ENCODE measurements at regions of chr12 and their contacts with region 1.

Region 1: DNA sequence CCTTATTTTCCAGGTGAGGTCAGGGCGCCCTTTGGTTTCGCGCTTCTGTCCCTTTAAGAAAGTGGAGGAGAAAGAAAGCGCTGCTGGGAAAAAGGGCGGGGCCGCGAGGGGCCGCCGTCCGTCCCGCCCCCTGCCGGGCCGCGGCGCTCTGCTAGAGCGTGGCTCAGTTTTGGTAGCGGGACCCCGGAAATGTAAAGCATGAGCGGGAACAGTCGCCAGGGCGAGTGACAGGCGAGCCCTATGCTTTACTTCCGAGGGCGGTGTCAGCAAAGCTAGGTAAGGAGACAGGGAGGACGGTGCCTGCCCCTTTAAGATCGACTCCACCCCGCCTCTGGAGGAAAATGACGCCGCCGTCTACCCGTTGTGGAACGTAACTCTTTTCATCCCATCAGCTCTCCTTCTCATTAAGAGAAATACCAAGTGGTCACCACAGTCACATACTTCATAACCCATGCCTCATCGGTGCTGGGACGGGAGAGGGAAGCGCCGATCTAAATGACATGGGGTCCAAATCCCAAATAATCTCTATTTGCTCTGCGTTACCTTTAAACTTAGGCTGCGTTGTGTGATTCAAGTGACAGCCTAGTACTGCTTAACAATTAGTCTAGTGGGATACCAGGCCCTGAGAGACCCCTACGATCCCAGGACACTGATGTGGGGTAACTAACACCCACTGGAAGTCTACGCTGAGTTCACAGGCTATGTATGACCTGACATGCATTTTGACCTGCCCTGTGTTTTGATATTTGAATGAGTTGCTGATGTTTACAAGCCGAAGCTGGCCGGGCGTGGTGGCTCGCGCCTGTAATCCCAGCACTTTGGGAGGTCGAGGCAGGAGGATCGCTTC is at the start of gene ETFBKMT:
- DNase-seq: peak; percentile 93
- ATAC-seq: peak; percentile 99
- H3K4me3 ChIP-seq: peak within 1 kb of the TSS; percentile 100
- H3K27ac ChIP-seq: peak within 1 kb of the TSS; percentile 72
- H3K4me1 ChIP-seq: peaks cover 8% of the 10 kb centered on the region
- H3K27me3 ChIP-seq: no peaks in the 10 kb centered on the region
- CTCF ChIP-seq: peak; percentile 21; the same call in 1 of the 2 replicates
- total RNA-seq, gene ETFBKMT: 0.52 and 0.58 TPM in 2 replicates

Region 2: GRCh38 chr12:31728917-31729640 is 69.8 kb after region 1 on chr12 and contains the start of gene AMN1:
- CTCF ChIA-PET with region 1: no interaction called
- POLR2A ChIA-PET with region 1: no interaction called
- intact Hi-C with region 1: loop called (anchors 2 kb)
- DNase-seq: peak; percentile 98
- ATAC-seq: peak; percentile 96
- H3K4me3 ChIP-seq: peak within 1 kb of the TSS; percentile 88
- H3K27ac ChIP-seq: peak within 1 kb of the TSS; percentile 77
- H3K4me1 ChIP-seq: peaks cover 38% of the 10 kb centered on the region
- H3K27me3 ChIP-seq: no peaks in the 10 kb centered on the region
- CTCF ChIP-seq: no peak
- total RNA-seq, gene AMN1: 2.1 and 3.9 TPM in 2 replicates

Region 3: DNA sequence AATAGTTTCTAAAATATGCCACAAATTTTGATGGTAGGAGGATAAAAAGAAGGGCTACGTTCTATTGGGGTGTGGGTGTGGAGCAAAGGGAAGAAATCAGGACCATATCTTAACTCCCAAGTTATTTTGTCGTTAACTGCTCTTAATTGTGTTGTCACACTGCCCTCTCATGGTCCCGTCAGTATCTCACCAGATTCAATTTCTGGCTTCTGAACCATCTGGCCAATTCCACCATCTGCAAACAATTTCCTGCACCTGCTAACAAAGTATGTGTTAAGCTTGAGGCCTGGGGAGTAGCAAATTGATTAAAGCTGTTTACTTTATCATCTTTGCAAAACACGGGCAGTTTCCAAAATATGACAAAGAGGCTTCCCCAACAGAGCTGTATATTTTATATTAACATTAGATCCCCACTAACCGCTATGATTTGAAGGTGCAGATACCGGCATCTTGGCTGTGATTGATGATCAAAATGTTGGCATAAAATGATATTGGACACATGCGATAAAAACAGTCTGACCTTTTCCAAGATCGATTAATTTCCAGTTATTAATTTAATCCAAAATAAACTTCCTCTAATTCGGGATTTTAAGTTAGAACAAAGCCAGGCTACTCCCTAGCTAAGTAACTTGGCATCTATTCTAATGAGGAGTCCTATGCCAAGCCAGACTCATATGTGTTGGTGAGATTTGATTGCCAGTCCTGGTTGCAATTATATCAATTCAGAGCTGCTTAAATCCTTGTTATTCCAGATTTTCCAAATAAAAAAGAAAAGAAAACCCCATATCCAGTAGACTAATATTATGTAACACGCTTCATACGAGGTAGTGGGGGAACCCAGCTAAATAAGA is 1012.8 kb after region 1 on chr12:
- CTCF ChIA-PET with region 1: no interaction called
- POLR2A ChIA-PET with region 1: no interaction called
- intact Hi-C with region 1: loop called (anchors 5 kb)
- DNase-seq: peak; percentile 63
- ATAC-seq: peak; percentile 54
- H3K4me3 ChIP-seq: no peak overlapping the region
- H3K27ac ChIP-seq: no peak overlapping the region
- H3K4me1 ChIP-seq: no peaks in the 10 kb centered on the region
- H3K27me3 ChIP-seq: no peaks in the 10 kb centered on the region
- CTCF ChIP-seq: peak; percentile 65

Measured in PC-3 (cell line).